ENCODE measurements at regions of chr7 and their contacts with region 1.

Region 1: DNA sequence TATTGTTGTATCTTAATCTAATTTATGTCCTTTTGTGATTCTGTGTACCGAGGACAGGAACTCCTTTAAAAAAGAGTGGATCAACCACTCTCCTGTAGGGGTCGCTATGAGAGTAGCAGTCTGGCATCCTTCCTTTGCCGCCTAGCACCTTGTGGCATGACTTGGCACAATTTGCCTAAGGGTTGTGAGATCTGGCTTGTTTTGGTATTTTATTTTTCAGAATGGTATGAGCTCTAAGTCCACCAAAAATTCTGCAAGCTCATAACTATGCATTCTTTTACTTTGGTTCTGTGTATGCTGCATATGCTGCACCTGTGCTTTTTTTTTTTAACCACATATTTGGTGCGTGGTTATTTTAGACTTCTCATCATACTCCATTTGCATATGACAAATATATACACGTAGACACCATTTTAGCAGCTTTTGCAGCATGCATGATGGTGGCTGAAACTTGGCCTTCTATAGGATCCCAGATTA is 112.8 kb downstream of the CDK14 start:
- DNase-seq: peak in 1 of 2 experiments; percentile 60
- H3K4me3 ChIP-seq: no peak overlapping the region
- H3K27ac ChIP-seq: no peak overlapping the region
- H3K4me1 ChIP-seq: peaks cover 3 to 22% (median 13%) of the 10 kb centered on the region in 4 experiments
- H3K27me3 ChIP-seq: no peaks in the 10 kb centered on the region
- CTCF ChIP-seq: peak; percentile 69 to 97 (median 89)
- EP300 ChIP-seq: no peak
- POLR2A ChIP-seq: no peak
- RAD21 ChIP-seq: peak; percentile 87 to 89

Region 2: GRCh38 chr7:90512821-90513254 is 196.0 kb before region 1 on chr7:
- CTCF ChIA-PET with region 1: no interaction called
- POLR2A ChIA-PET with region 1: no interaction called
- DNase-seq: no peak
- H3K4me3 ChIP-seq: no peak overlapping the region
- H3K27ac ChIP-seq: no peak overlapping the region
- H3K4me1 ChIP-seq: no peaks in the 10 kb centered on the region
- H3K27me3 ChIP-seq: no peaks in the 10 kb centered on the region
- CTCF ChIP-seq: no peak
- EP300 ChIP-seq: no peak
- POLR2A ChIP-seq: no peak
- RAD21 ChIP-seq: no peak

Region 3: DNA sequence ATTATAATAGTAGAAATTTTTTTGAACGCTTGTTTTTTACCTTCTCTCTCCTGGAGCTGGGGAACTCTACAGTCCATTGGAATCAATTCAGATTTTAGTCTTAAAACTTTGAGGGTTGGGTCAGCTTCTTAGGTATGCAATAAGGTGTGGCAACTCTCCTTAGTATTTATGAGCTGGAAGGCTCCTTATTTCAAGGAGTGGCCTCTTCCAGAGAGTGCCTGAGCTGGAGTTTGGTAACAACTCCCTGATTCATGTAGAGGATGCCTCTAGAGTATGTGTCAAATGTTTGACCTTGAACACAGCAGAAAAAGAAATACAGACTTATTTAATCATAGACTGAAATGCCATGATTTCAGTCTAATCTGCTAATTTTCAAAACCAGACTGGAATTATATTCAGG is 101.7 kb before region 1 on chr7:
- CTCF ChIA-PET with region 1: no interaction called
- POLR2A ChIA-PET with region 1: no interaction called
- DNase-seq: no peak
- H3K4me3 ChIP-seq: no peak overlapping the region
- H3K27ac ChIP-seq: no peak overlapping the region
- H3K4me1 ChIP-seq: no peaks in the 10 kb centered on the region
- H3K27me3 ChIP-seq: no peaks in the 10 kb centered on the region
- CTCF ChIP-seq: no peak
- EP300 ChIP-seq: no peak
- POLR2A ChIP-seq: no peak
- RAD21 ChIP-seq: no peak

Region 4: GRCh38 chr7:90698616-90699015 is 10.3 kb before region 1 on chr7:
- CTCF ChIA-PET with region 1: interaction called, 15 read pairs
- POLR2A ChIA-PET with region 1: interaction called, 4 read pairs
- DNase-seq: no peak
- H3K4me3 ChIP-seq: no peak overlapping the region
- H3K27ac ChIP-seq: no peak overlapping the region
- H3K4me1 ChIP-seq: peaks cover 0 to 6% (median 1%) of the 10 kb centered on the region in 4 experiments; a peak in 2 of 7 replicates
- H3K27me3 ChIP-seq: no peaks in the 10 kb centered on the region
- CTCF ChIP-seq: no peak
- EP300 ChIP-seq: no peak
- POLR2A ChIP-seq: no peak
- RAD21 ChIP-seq: no peak

Region 5: GRCh38 chr7:90749262-90749661 is 40.4 kb after region 1 on chr7:
- CTCF ChIA-PET with region 1: interaction called, 12 read pairs
- POLR2A ChIA-PET with region 1: no interaction called
- DNase-seq: no peak
- H3K4me3 ChIP-seq: no peak overlapping the region
- H3K27ac ChIP-seq: no peak overlapping the region
- H3K4me1 ChIP-seq: peaks cover 0 to 2% (median 0%) of the 10 kb centered on the region in 4 experiments; a peak in 2 of 7 replicates
- H3K27me3 ChIP-seq: no peaks in the 10 kb centered on the region
- CTCF ChIP-seq: no peak
- EP300 ChIP-seq: no peak
- POLR2A ChIP-seq: no peak
- RAD21 ChIP-seq: no peak

Region 6: GRCh38 chr7:90766814-90767564 is 58.1 kb after region 1 on chr7:
- CTCF ChIA-PET with region 1: no interaction called
- POLR2A ChIA-PET with region 1: no interaction called
- DNase-seq: no peak
- H3K4me3 ChIP-seq: no peak overlapping the region
- H3K27ac ChIP-seq: no peak overlapping the region
- H3K4me1 ChIP-seq: peaks cover 0 to 5% (median 0%) of the 10 kb centered on the region in 4 experiments; a peak in 1 of 7 replicates
- H3K27me3 ChIP-seq: no peaks in the 10 kb centered on the region
- CTCF ChIP-seq: no peak
- EP300 ChIP-seq: no peak
- POLR2A ChIP-seq: no peak
- RAD21 ChIP-seq: no peak

Region 7: GRCh38 chr7:91034459-91035368 is 325.8 kb after region 1 on chr7:
- CTCF ChIA-PET with region 1: interaction called, 66 read pairs
- POLR2A ChIA-PET with region 1: no interaction called
- DNase-seq: peak in 1 of 2 experiments; percentile 74
- H3K4me3 ChIP-seq: no peak overlapping the region
- H3K27ac ChIP-seq: no peak overlapping the region
- H3K4me1 ChIP-seq: peaks cover 8 to 18% (median 14%) of the 10 kb centered on the region in 4 experiments; a peak in 5 of 7 replicates
- H3K27me3 ChIP-seq: no peaks in the 10 kb centered on the region
- CTCF ChIP-seq: peak in 2 of 3 experiments; percentile 63 to 78; a peak in 3 of 4 replicates
- EP300 ChIP-seq: no peak
- POLR2A ChIP-seq: no peak
- RAD21 ChIP-seq: peak; percentile 92 to 95

Measured in H1 (cell line).